ENCODE measurements at regions of chr21 and their contacts with region 1.

Region 1: GRCh38 chr21:46144464-46145070 is 10.8 kb downstream of the FTCD start:
- DNase-seq: no peak
- H3K4me3 ChIP-seq: no peak overlapping the region
- H3K27ac ChIP-seq: peak overlapping the region; percentile 90
- H3K4me1 ChIP-seq: peaks cover 7% of the 10 kb centered on the region
- H3K27me3 ChIP-seq: no peaks in the 10 kb centered on the region
- CTCF ChIP-seq: no peak
- POLR2A ChIP-seq: no peak

Region 2: GRCh38 chr21:46207006-46207981 is 62.7 kb after region 1 on chr21:
- intact Hi-C with region 1: no loop called
- DNase-seq: no peak
- H3K4me3 ChIP-seq: no peak overlapping the region
- H3K27ac ChIP-seq: no peak overlapping the region
- H3K4me1 ChIP-seq: no peaks in the 10 kb centered on the region
- H3K27me3 ChIP-seq: no peaks in the 10 kb centered on the region
- CTCF ChIP-seq: no peak
- POLR2A ChIP-seq: no peak

Region 3: DNA sequence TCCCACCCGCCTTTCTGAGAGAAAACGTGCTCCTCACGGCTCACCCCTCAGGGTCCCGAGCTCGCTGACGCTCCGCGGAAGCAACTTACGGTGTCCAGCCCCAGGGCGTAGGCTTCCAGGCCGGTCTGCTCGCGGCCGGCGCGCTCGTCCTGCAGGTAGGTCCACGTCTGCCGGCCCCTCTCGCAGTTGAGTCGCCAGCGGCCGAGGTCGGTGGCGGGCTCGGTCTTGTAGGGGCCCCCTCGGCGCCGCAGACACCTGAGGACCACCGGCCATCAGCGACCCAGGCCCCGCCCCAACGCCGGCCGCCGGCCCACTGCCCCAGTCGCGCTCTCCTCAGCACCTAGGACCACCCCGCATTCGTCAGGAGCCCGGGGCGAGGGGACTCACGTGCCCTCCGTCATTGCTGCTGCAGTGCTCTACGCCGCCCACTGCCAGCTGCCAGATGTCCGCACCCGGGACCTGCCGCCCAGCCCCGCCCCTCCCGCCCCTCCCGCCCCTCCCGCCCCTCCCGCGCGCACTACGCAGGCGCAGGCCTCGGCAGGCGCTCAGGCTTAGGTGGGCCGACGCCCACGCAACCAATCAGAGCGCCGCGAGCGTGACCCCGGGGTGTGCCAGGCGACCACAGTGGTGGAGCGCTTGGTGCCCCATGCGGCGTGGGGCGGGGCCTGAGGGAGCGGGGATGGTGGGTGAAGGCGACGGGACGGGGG is 83.9 kb after region 1 on chr21 and contains the start of gene LSS:
- intact Hi-C with region 1: loop called (anchors 10 kb)
- DNase-seq: peak; percentile 93 to 97
- H3K4me3 ChIP-seq: peak within 1 kb of the TSS; percentile 60 to 97
- H3K27ac ChIP-seq: peak within 1 kb of the TSS; percentile 96
- H3K4me1 ChIP-seq: peaks cover 33% of the 10 kb centered on the region
- H3K27me3 ChIP-seq: no peaks in the 10 kb centered on the region
- CTCF ChIP-seq: no peak
- POLR2A ChIP-seq: peak in 1 of 2 donors; percentile 57
- total RNA-seq, gene LSS: 103 TPM